ENCODE measurements at regions of chr1 and their contacts with region 1.

Region 1: DNA sequence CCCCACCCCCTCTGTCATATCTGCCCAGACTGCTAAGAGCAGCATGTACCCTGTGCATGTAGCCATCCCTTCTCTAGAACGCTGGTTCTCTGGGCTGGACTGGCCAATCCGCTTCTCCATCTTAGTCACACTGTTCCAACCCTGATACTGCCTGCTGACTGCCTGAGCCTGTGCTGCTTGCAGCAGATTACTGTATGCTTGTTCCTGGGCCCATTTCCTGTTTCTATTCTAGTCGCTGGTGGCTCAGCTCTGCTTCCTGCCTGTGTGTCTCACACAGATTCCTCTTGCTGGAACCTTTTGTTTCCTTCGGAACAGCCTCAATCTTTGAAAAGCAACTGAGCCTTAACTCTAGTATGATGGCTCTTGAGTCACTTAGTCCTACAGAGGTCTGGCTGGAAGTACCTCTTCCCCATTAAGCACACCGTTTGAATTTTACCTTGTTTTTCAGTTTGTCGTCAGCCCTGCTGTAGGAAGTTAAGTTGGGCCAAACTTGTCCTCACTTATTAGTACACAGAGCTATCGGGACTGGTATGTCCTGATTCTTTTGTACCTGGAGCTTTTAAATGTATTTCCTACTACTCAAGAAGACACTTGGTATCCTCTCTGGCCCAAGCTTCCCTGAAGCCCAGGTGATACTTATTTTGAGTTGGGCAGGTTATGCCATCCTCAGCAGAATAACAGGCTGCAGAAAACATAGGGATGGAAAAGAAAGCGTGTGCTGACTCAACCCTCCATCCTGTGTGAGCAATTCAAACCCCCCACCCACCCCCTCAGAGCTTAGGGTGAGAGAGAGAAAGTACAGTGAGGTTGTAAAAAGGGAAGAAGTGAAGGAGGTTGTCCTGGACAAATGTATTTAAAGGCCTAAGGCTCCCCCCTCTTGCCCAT is 43.4 kb upstream of the PIGV start:
- DNase-seq: peak; percentile 42 to 93 (median 79)
- ATAC-seq: peak; percentile 91
- H3K4me3 ChIP-seq: peak overlapping the region; percentile 22 to 31
- H3K4me3 Mint-ChIP-seq: peak overlapping the region; percentile 66
- H3K27ac ChIP-seq: peak overlapping the region; percentile 13 to 84
- H3K27ac Mint-ChIP-seq: peak overlapping the region; percentile 91
- H3K4me1 ChIP-seq: peaks cover 90% of the 10 kb centered on the region
- H3K4me1 Mint-ChIP-seq: peaks cover 89% of the 10 kb centered on the region
- H3K27me3 ChIP-seq: no peaks in the 10 kb centered on the region
- H3K27me3 Mint-ChIP-seq: no peaks in the 10 kb centered on the region
- CTCF ChIP-seq: no peak

Region 2: DNA sequence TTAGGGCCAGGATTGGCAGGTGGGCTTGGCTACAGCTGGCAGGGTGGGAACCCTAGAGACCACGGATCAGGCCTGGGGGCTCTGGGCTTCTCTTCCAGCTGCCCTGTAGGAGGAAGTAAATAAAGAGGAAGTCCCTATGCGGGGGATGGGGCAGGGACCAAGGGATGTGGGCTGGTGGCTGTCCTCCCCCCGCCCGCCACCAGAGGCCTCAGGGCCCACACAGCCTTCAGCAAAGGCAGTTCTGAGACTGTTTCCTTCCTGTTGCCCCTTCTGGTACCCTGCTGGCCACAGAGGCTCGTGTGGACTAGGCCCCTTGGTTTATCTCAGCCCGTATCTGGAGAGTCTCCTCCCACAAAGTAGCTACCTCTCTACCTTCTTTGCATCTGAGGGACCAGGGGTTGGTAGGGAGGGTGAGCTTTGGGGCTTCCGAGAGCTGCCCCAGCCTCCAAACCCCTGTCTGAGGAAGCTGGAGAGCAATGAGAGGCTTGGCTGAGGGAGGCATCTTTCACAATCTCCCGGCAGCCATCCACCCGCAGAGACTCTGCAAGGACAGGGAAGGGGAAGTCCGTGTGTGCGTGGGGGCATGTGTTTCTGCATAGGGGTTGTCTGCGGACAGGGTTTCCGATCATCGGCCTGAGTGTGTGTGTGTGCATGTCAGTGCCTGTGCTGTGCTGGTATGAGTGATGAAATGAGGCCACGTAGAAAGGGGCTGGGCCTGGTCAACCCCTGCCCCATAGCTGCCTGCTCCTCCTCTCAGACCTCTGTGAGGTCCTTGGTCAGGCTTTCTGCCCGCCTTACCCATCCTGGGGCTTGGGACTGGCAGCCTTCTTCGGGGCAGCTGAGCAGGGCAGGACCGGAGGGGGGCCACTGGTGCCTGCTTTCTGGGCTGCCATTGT is 202.3 kb before region 1 on chr1:
- CTCF ChIA-PET with region 1: no interaction called
- POLR2A ChIA-PET with region 1: no interaction called
- intact Hi-C with region 1: loop called in 1 of 2 experiments (anchors 1 kb)
- DNase-seq: peak; percentile 45 to 90 (median 76)
- ATAC-seq: peak; percentile 71
- H3K4me3 ChIP-seq: peak overlapping the region; percentile 32 to 36
- H3K4me3 Mint-ChIP-seq: peak overlapping the region; percentile 81
- H3K27ac ChIP-seq: peak overlapping the region; percentile 56 to 85
- H3K27ac Mint-ChIP-seq: peak overlapping the region; percentile 97
- H3K4me1 ChIP-seq: peaks cover 87% of the 10 kb centered on the region
- H3K4me1 Mint-ChIP-seq: peaks cover 88% of the 10 kb centered on the region
- H3K27me3 ChIP-seq: no peaks in the 10 kb centered on the region
- H3K27me3 Mint-ChIP-seq: no peaks in the 10 kb centered on the region
- CTCF ChIP-seq: peak; percentile 65

Region 3: GRCh38 chr1:26700711-26701110 is 43.6 kb before region 1 on chr1:
- CTCF ChIA-PET with region 1: interaction called, 8 read pairs
- POLR2A ChIA-PET with region 1: interaction called, 72 read pairs
- intact Hi-C with region 1: loop called in 1 of 2 experiments (anchors 2 kb)
- DNase-seq: no peak
- ATAC-seq: no peak
- H3K4me3 ChIP-seq: peak overlapping the region in 1 of 2 experiments; percentile 8
- H3K4me3 Mint-ChIP-seq: no peak overlapping the region
- H3K27ac ChIP-seq: peak overlapping the region in 1 of 2 experiments; percentile 18
- H3K27ac Mint-ChIP-seq: no peak overlapping the region
- H3K4me1 ChIP-seq: peaks cover 72% of the 10 kb centered on the region
- H3K4me1 Mint-ChIP-seq: peaks cover 9% of the 10 kb centered on the region
- H3K27me3 ChIP-seq: no peaks in the 10 kb centered on the region
- H3K27me3 Mint-ChIP-seq: no peaks in the 10 kb centered on the region
- CTCF ChIP-seq: no peak

Region 4: DNA sequence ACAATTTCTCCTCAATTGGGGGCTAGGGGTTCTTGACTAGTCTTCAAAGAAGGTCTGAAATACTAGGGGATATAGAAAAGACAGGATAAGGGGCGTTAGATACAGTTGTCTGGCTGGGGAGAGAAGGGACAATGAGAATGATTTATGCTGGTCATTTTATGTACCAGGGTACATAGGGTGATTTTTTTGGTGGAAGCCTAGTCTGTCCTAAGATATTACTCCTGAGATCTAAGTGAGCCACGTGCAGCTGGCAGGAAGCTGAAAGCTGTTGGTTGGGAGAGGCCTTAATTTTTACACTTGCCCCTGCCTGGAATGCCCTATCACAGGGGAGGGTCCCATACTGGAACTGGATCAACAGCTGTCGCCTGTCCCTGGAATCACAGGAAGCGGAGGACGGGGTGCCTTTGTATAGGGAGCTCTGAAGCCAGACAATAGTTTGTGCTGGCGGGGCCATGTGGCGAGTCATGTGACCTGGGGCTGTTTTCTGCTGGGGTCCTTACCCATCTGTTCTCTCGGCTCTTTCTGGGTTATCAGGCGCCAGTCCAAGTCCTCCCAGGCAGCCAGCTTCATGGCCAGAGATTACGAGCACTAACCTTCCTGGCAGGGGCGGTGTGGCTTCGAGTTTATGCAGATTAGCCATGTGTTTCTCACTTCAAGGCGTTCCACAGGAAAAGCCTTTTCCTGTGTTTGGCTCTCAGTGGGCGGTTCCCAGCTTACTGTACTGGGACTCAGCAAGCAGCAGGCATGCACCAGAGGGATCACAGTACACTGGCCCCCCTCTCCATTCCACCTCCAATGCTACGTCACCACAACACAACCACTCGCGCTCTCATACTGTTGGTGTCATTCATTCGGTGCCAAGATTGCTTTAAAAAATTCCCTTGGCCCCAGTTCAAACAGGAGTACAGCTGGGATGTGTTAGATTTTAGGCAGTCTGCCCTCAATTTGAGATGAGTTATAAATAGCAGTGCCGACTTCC is 21.0 kb before region 1 on chr1:
- CTCF ChIA-PET with region 1: interaction called, 10 read pairs
- POLR2A ChIA-PET with region 1: interaction called, 9 read pairs
- intact Hi-C with region 1: loop called in 1 of 2 experiments (anchors 1 kb)
- DNase-seq: peak in 8 of 9 experiments; percentile 21 to 82 (median 54)
- ATAC-seq: peak; percentile 79
- H3K4me3 ChIP-seq: peak overlapping the region; percentile 10 to 13
- H3K4me3 Mint-ChIP-seq: peak overlapping the region; percentile 63
- H3K27ac ChIP-seq: peak overlapping the region in 1 of 2 experiments; percentile 54
- H3K27ac Mint-ChIP-seq: peak overlapping the region; percentile 88
- H3K4me1 ChIP-seq: peaks cover 91% of the 10 kb centered on the region
- H3K4me1 Mint-ChIP-seq: peaks cover 93% of the 10 kb centered on the region
- H3K27me3 ChIP-seq: no peaks in the 10 kb centered on the region
- H3K27me3 Mint-ChIP-seq: no peaks in the 10 kb centered on the region
- CTCF ChIP-seq: no peak

Region 5: GRCh38 chr1:26728645-26729044 is 15.7 kb before region 1 on chr1:
- CTCF ChIA-PET with region 1: interaction called, 10 read pairs
- POLR2A ChIA-PET with region 1: interaction called, 9 read pairs
- intact Hi-C with region 1: loop called in 1 of 2 experiments (anchors 1 kb)
- DNase-seq: no peak
- ATAC-seq: no peak
- H3K4me3 ChIP-seq: no peak overlapping the region
- H3K4me3 Mint-ChIP-seq: no peak overlapping the region
- H3K27ac ChIP-seq: peak overlapping the region in 1 of 2 experiments; percentile 24
- H3K27ac Mint-ChIP-seq: peak overlapping the region; percentile 43
- H3K4me1 ChIP-seq: peaks cover 68% of the 10 kb centered on the region
- H3K4me1 Mint-ChIP-seq: peaks cover 88% of the 10 kb centered on the region
- H3K27me3 ChIP-seq: no peaks in the 10 kb centered on the region
- H3K27me3 Mint-ChIP-seq: no peaks in the 10 kb centered on the region
- CTCF ChIP-seq: no peak

Region 6: DNA sequence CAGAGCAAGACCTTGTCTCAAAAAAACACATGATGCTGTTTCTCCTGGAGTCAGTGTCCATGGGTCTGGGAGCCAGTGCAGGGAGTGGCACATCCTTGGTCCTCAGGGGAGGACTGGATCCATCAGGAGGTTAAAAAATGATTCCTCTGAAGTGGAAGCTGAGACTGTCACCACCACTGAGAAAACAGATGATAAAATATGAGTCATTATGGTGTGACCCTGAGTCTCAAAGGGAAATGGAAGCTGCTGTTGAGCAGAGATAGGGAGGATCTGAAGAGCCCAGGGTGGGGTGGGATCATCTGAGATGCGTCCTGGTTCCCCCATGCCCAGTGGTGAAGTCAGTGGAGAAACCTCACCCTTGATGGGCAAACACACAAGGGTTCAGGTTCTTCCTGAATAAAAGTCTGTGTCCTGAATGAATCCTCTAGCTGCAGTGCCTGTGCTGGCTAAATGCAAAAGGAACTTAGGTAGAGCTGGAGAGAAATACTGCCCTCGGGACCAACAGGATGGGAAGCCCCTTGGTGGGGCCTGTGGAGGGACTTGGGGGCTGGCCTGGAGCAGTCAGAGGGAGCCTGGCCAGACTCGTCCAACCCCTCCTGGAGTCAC is 330.0 kb after region 1 on chr1:
- CTCF ChIA-PET with region 1: no interaction called
- POLR2A ChIA-PET with region 1: no interaction called
- intact Hi-C with region 1: no loop called
- DNase-seq: no peak
- ATAC-seq: no peak
- H3K4me3 ChIP-seq: no peak overlapping the region
- H3K4me3 Mint-ChIP-seq: no peak overlapping the region
- H3K27ac ChIP-seq: no peak overlapping the region
- H3K27ac Mint-ChIP-seq: no peak overlapping the region
- H3K4me1 ChIP-seq: no peaks in the 10 kb centered on the region
- H3K4me1 Mint-ChIP-seq: no peaks in the 10 kb centered on the region
- H3K27me3 ChIP-seq: no peaks in the 10 kb centered on the region
- H3K27me3 Mint-ChIP-seq: peaks cover 4% of the 10 kb centered on the region
- CTCF ChIP-seq: no peak

Measured in CD8-positive, alpha-beta T cell (primary cell).